ENCODE measurements at regions of chr19 and their contacts with region 1.

Region 1: DNA sequence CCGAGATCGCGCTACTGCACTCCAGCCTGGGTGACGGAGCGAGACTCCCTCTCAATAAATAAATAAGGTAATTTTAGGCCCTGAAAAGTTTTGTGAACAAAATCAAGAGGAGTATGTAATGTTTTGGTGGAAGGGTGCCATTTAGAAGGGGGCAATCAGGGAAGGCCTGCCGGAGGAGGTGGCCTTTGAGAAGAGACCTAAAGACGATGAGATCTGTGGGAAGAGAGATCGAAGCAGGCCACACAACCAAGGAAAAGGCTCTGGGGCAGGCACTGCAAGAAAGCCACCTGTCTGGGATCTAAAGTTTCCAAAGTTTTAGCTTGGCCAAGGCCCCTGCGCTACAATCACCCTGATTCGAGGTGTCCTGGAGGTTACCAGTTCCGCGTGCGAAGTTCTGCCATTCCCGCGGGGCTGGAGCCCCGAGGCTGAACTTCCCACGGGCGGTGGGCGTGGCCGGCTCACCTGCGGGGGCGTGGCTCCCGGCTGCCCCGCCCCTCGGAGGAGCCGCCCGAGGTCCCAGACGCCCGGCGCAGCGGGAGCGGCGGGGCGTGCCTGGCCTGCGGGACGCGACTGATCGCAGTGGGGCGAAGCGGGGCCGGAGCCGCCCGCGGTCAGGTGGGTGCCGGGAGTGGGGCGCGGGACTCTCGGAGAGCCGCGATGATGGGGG is at the start of gene KLC3:
- DNase-seq: peak; percentile 50 to 85
- H3K4me3 ChIP-seq: peak within 1 kb of the TSS; percentile 56
- H3K27ac ChIP-seq: no peak within 1 kb of the TSS
- H3K4me1 ChIP-seq: peaks cover 8% of the 10 kb centered on the region
- H3K27me3 ChIP-seq: no peaks in the 10 kb centered on the region
- CTCF ChIP-seq: no peak
- total RNA-seq, gene KLC3: 20.6 and 30.7 TPM in 2 replicates

Region 2: GRCh38 chr19:45016388-45017319 is 323.7 kb before region 1 on chr19:
- CTCF ChIA-PET with region 1: no interaction called
- POLR2A ChIA-PET with region 1: no interaction called
- intact Hi-C with region 1: loop called (anchors 1 kb)
- DNase-seq: peak; percentile 67 to 75
- H3K4me3 ChIP-seq: no peak overlapping the region
- H3K27ac ChIP-seq: no peak overlapping the region
- H3K4me1 ChIP-seq: no peaks in the 10 kb centered on the region
- H3K27me3 ChIP-seq: no peaks in the 10 kb centered on the region
- CTCF ChIP-seq: peak; percentile 80

Region 3: DNA sequence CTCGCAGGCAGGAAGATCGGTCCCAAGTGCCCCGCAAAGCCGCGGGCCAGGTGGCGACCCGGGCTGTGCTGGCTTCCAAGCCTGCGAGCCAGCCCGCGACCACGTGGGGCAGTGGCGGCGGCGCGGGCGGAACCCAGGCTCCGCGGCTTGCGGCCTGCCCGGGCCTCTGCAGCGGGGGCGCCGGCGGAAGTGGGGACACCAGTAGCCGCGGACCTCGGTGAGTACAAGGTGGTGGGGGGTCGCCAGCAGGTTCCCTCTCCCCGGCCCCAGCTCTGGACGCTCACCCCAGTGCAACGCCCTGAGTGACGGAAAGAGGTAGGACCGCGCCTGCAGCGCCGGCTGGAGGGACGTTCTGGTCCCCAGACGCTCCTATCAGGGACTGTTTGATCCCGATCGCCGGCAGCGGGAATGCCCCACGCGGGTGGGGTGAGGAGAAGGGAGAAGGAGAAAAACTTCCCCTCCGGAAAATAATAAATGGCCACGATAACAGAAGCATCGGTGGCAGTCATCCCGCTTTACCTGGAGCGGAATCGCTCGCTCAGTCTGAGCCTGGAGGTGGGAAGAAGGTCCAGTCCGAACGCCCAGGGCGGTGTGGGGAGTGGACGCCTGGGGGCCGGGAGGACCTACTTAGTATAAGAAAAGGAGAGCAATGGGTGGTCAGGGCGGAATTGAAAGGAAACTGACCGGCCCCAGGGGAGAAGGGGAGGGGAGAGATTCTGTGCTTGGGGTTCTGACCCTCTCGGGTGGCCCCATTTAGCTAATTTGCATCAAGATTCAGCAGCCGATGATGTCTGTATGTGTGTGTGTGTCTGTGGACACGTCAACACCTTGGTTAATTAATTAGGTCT is 261.1 kb before region 1 on chr19 and contains the start of gene GEMIN7:
- CTCF ChIA-PET with region 1: no interaction called
- POLR2A ChIA-PET with region 1: no interaction called
- intact Hi-C with region 1: loop called (anchors 5 kb)
- DNase-seq: peak; percentile 64 to 83
- H3K4me3 ChIP-seq: peak within 1 kb of the TSS; percentile 83
- H3K27ac ChIP-seq: peak within 1 kb of the TSS; percentile 48
- H3K4me1 ChIP-seq: peaks cover 32% of the 10 kb centered on the region
- H3K27me3 ChIP-seq: no peaks in the 10 kb centered on the region
- CTCF ChIP-seq: no peak
- total RNA-seq, gene GEMIN7: 29.6 and 30.6 TPM in 2 replicates

Region 4: GRCh38 chr19:45200568-45200994 is 139.8 kb before region 1 on chr19:
- CTCF ChIA-PET with region 1: no interaction called
- POLR2A ChIA-PET with region 1: no interaction called
- intact Hi-C with region 1: loop called (anchors 1 kb)
- DNase-seq: peak in 1 of 2 experiments; percentile 11
- H3K4me3 ChIP-seq: no peak overlapping the region
- H3K27ac ChIP-seq: no peak overlapping the region
- H3K4me1 ChIP-seq: no peaks in the 10 kb centered on the region
- H3K27me3 ChIP-seq: no peaks in the 10 kb centered on the region
- CTCF ChIP-seq: peak; percentile 44

Region 5: GRCh38 chr19:45245334-45245787 is 95.0 kb before region 1 on chr19 and contains the start of gene EXOC3L2:
- CTCF ChIA-PET with region 1: no interaction called
- POLR2A ChIA-PET with region 1: no interaction called
- intact Hi-C with region 1: loop called (anchors 5 kb)
- DNase-seq: no peak
- H3K4me3 ChIP-seq: no peak within 1 kb of the TSS
- H3K27ac ChIP-seq: no peak within 1 kb of the TSS
- H3K4me1 ChIP-seq: peaks cover 3% of the 10 kb centered on the region
- H3K27me3 ChIP-seq: peaks cover 6% of the 10 kb centered on the region; the same call in 1 of the 2 replicates
- CTCF ChIP-seq: no peak
- total RNA-seq, gene EXOC3L2: not detected in 2 replicates

Region 6: GRCh38 chr19:45478454-45479238 is 138.3 kb after region 1 on chr19:
- CTCF ChIA-PET with region 1: no interaction called
- POLR2A ChIA-PET with region 1: no interaction called
- intact Hi-C with region 1: loop called (anchors 5 kb)
- DNase-seq: peak; percentile 87 to 90
- H3K4me3 ChIP-seq: peak overlapping the region; percentile 62
- H3K27ac ChIP-seq: peak overlapping the region; percentile 83
- H3K4me1 ChIP-seq: peaks cover 12% of the 10 kb centered on the region
- H3K27me3 ChIP-seq: no peaks in the 10 kb centered on the region
- CTCF ChIP-seq: peak; percentile 99